GM12878 (cell line): ENCODE measurements at regions of chr1 and their contacts with region 1.

Region 1: GRCh38 chr1:156129706-156130581 is 15.4 kb downstream of the LMNA start:
- DNase-seq: no peak
- ATAC-seq: peak; percentile 29
- H3K4me3 ChIP-seq: no peak overlapping the region
- H3K27ac ChIP-seq: peak overlapping the region; percentile 56
- H3K4me1 ChIP-seq: peaks cover 47% of the 10 kb centered on the region
- H3K27me3 ChIP-seq: no peaks in the 10 kb centered on the region
- CTCF ChIP-seq: peak; percentile 90 to 97 (median 96)
- EP300 ChIP-seq: no peak
- POLR2A ChIP-seq: no peak
- RAD21 ChIP-seq: peak; percentile 96

Region 2: GRCh38 chr1:155989242-155990004 is 140.5 kb before region 1 on chr1:
- CTCF ChIA-PET with region 1: interaction called, 7 read pairs
- POLR2A ChIA-PET with region 1: no interaction called
- RAD21 ChIA-PET with region 1: no interaction called
- SMC1A ChIA-PET with region 1: no interaction called
- in situ Hi-C with region 1: no loop called
- intact Hi-C with region 1: loop called (anchors 1 kb)
- DNase-seq: no peak
- ATAC-seq: peak; percentile 97
- H3K4me3 ChIP-seq: no peak overlapping the region
- H3K27ac ChIP-seq: peak overlapping the region; percentile 40; the same call in 1 of the 2 replicates
- H3K4me1 ChIP-seq: peaks cover 17% of the 10 kb centered on the region
- H3K27me3 ChIP-seq: no peaks in the 10 kb centered on the region
- CTCF ChIP-seq: peak; percentile 96 to 99 (median 99)
- EP300 ChIP-seq: no peak
- POLR2A ChIP-seq: no peak
- RAD21 ChIP-seq: peak; percentile 100

Region 3: GRCh38 chr1:156090822-156091188 is 39.1 kb before region 1 on chr1:
- CTCF ChIA-PET with region 1: interaction called, 1,294 read pairs
- POLR2A ChIA-PET with region 1: interaction called, 89 read pairs
- RAD21 ChIA-PET with region 1: interaction called, 695 read pairs
- SMC1A ChIA-PET with region 1: interaction called, 874 read pairs
- in situ Hi-C with region 1: loop called (anchors 5 kb)
- intact Hi-C with region 1: loop called (anchors 1 kb)
- DNase-seq: no peak
- ATAC-seq: peak; percentile 99
- H3K4me3 ChIP-seq: no peak overlapping the region
- H3K27ac ChIP-seq: no peak overlapping the region
- H3K4me1 ChIP-seq: peaks cover 5% of the 10 kb centered on the region
- H3K27me3 ChIP-seq: no peaks in the 10 kb centered on the region
- CTCF ChIP-seq: peak; percentile 69 to 90 (median 73)
- EP300 ChIP-seq: no peak
- POLR2A ChIP-seq: no peak
- RAD21 ChIP-seq: peak; percentile 92

Region 4: DNA sequence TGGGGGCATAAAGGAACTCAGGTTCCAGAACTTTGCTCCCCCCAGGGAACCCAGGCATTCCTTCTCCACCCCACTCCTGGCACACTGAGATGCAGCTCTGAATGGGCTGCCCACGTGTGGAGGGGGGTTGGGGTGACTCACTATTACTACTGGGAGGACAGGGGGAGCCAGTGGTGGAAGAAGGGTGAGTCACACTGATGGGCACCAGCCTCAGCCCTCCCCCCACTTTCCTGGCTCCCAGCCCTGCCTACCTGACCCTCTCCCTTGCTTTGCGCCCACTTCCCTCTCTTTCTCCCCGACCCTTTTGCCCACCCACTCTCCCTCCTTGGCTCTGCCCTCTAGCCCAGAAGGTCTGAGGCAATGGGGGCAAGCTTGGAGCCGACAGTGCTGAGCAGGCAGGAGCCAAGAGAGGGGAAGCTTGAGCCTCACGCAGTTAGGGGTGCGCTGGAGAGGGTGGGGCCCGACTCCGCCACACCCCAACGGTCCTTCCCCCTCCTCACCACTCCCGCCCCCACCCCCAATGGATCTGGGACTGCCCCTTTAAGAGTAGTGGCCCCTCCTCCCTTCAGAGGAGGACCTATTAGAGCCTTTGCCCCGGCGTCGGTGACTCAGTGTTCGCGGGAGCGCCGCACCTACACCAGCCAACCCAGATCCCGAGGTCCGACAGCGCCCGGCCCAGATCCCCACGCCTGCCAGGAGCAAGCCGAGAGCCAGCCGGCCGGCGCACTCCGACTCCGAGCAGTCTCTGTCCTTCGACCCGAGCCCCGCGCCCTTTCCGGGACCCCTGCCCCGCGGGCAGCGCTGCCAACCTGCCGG is 15.6 kb before region 1 on chr1 and contains the start of gene LMNA:
- CTCF ChIA-PET with region 1: interaction called, 60 read pairs
- POLR2A ChIA-PET with region 1: interaction called, 61 read pairs
- RAD21 ChIA-PET with region 1: interaction called, 695 read pairs
- SMC1A ChIA-PET with region 1: interaction called, 874 read pairs
- in situ Hi-C with region 1: no loop called
- intact Hi-C with region 1: no loop called
- DNase-seq: peak; percentile 48
- ATAC-seq: peak; percentile 88
- H3K4me3 ChIP-seq: peak within 1 kb of the TSS; percentile 94
- H3K27ac ChIP-seq: peak within 1 kb of the TSS; percentile 53; the same call in 1 of the 2 replicates
- H3K4me1 ChIP-seq: peaks cover 12% of the 10 kb centered on the region
- H3K27me3 ChIP-seq: no peaks in the 10 kb centered on the region
- CTCF ChIP-seq: no peak
- EP300 ChIP-seq: no peak; a peak in 1 of 4 replicates
- POLR2A ChIP-seq: peak; percentile 82
- RAD21 ChIP-seq: no peak
- polyA plus RNA-seq, gene LMNA: 0.42 to 6.0 TPM

Region 5: GRCh38 chr1:156226116-156226538 is 96.2 kb after region 1 on chr1:
- CTCF ChIA-PET with region 1: interaction called, 41 read pairs
- POLR2A ChIA-PET with region 1: no interaction called
- RAD21 ChIA-PET with region 1: interaction called, 37 read pairs
- SMC1A ChIA-PET with region 1: interaction called, 42 read pairs
- in situ Hi-C with region 1: no loop called
- intact Hi-C with region 1: no loop called
- DNase-seq: peak; percentile 90
- ATAC-seq: peak; percentile 87
- H3K4me3 ChIP-seq: no peak overlapping the region
- H3K27ac ChIP-seq: peak overlapping the region; percentile 98
- H3K4me1 ChIP-seq: peaks cover 25% of the 10 kb centered on the region
- H3K27me3 ChIP-seq: no peaks in the 10 kb centered on the region
- CTCF ChIP-seq: no peak
- EP300 ChIP-seq: peak; percentile 79 to 92
- POLR2A ChIP-seq: no peak; the same call in 1 of the 2 replicates
- RAD21 ChIP-seq: no peak

Region 6: GRCh38 chr1:156319664-156320063 is 189.7 kb after region 1 on chr1:
- CTCF ChIA-PET with region 1: interaction called, 13 read pairs
- POLR2A ChIA-PET with region 1: no interaction called
- RAD21 ChIA-PET with region 1: no interaction called
- SMC1A ChIA-PET with region 1: interaction called, 6 read pairs
- in situ Hi-C with region 1: no loop called
- intact Hi-C with region 1: no loop called
- DNase-seq: no peak
- ATAC-seq: no peak
- H3K4me3 ChIP-seq: no peak overlapping the region
- H3K27ac ChIP-seq: no peak overlapping the region
- H3K4me1 ChIP-seq: no peaks in the 10 kb centered on the region
- H3K27me3 ChIP-seq: no peaks in the 10 kb centered on the region
- CTCF ChIP-seq: peak; percentile 41 to 51 (median 46)
- EP300 ChIP-seq: no peak
- POLR2A ChIP-seq: no peak
- RAD21 ChIP-seq: peak; percentile 64

Region 7: GRCh38 chr1:156344409-156344808 is 214.5 kb after region 1 on chr1:
- CTCF ChIA-PET with region 1: no interaction called
- POLR2A ChIA-PET with region 1: no interaction called
- RAD21 ChIA-PET with region 1: no interaction called
- SMC1A ChIA-PET with region 1: no interaction called
- in situ Hi-C with region 1: no loop called
- intact Hi-C with region 1: no loop called
- DNase-seq: no peak
- ATAC-seq: no peak
- H3K4me3 ChIP-seq: no peak overlapping the region
- H3K27ac ChIP-seq: no peak overlapping the region
- H3K4me1 ChIP-seq: no peaks in the 10 kb centered on the region
- H3K27me3 ChIP-seq: peaks cover 0 to 5% of the 10 kb centered on the region in 2 experiments; a peak in 1 of 4 replicates
- CTCF ChIP-seq: no peak
- EP300 ChIP-seq: no peak
- POLR2A ChIP-seq: no peak
- RAD21 ChIP-seq: no peak